Activated T-helper 2 cell treated with anti-CD3 and anti-CD28 coated beads, Interferon-gamma antibody, Interleukin-2, Interleukin-4, amounts not matched to agents 10 μg/mL and 5 μg/mL and 100 μg/mL, durations not matched to agents 14 hours and 24 hours and 36 hours (primary cell): ENCODE measurements at regions of chr16 and their contacts with region 1.

Region 1: GRCh38 chr16:75519881-75520280 is 16.0 kb downstream of the CHST5 start:
- DNase-seq: no peak
- H3K4me3 Mint-ChIP-seq: no peak overlapping the region
- H3K27ac Mint-ChIP-seq: no peak overlapping the region
- H3K4me1 Mint-ChIP-seq: peaks cover 7% of the 10 kb centered on the region
- H3K27me3 Mint-ChIP-seq: peaks cover 7% of the 10 kb centered on the region

Region 2: GRCh38 chr16:74501484-74502479 is 1018.1 kb before region 1 on chr16:
- intact Hi-C with region 1: no loop called
- DNase-seq: no peak
- H3K4me3 Mint-ChIP-seq: no peak overlapping the region
- H3K27ac Mint-ChIP-seq: no peak overlapping the region
- H3K4me1 Mint-ChIP-seq: no peaks in the 10 kb centered on the region
- H3K27me3 Mint-ChIP-seq: no peaks in the 10 kb centered on the region

Region 3: GRCh38 chr16:75464130-75464918 is 55.6 kb before region 1 on chr16 and contains the start of gene TMEM170A:
- intact Hi-C with region 1: loop called (anchors 1 kb)
- DNase-seq: peak; percentile 98
- H3K4me3 Mint-ChIP-seq: peak within 1 kb of the TSS; percentile 91
- H3K27ac Mint-ChIP-seq: peak within 1 kb of the TSS; percentile 89
- H3K4me1 Mint-ChIP-seq: peaks cover 36% of the 10 kb centered on the region
- H3K27me3 Mint-ChIP-seq: peaks cover 2% of the 10 kb centered on the region
- total RNA-seq, gene TMEM170A: 35.6 and 39.9 TPM in 2 replicates

Region 4: GRCh38 chr16:75555707-75556430 is 36.0 kb after region 1 on chr16 and contains the start of gene TMEM231:
- intact Hi-C with region 1: loop called (anchors 2 kb)
- DNase-seq: peak; percentile 94
- H3K4me3 Mint-ChIP-seq: peak within 1 kb of the TSS; percentile 90
- H3K27ac Mint-ChIP-seq: peak within 1 kb of the TSS; percentile 86
- H3K4me1 Mint-ChIP-seq: peaks cover 7% of the 10 kb centered on the region
- H3K27me3 Mint-ChIP-seq: peaks cover 26% of the 10 kb centered on the region
- total RNA-seq, gene TMEM231: 2.7 and 3.4 TPM in 2 replicates

Region 5: DNA sequence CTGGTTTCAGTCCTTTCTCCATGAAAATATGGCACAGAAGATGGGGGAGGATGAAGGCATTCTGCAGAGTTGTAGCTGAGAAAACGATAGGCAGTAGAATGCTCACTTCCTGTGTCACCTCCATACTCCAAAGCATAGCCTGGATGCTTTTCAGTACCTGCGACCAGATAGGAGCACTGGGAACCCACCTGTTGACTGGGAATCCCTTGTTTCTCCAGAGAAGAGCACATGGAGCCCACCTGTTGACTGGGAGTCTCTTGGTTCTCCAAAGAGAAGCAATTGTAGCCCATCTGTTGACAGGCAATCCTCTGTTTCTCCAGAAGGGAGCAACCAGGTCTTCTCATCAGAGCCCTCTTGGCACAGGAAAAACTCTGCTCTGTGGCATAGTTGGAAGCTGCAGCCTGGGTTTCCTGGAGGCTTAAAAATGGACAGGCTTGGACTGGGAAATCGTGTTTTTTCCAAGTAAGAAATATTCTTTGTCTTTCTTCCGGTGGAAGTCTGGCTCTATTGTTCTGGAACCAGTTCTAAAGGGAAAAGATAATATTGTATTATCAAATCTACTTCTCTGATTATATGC is 140.9 kb after region 1 on chr16:
- intact Hi-C with region 1: no loop called
- DNase-seq: no peak
- H3K4me3 Mint-ChIP-seq: no peak overlapping the region
- H3K27ac Mint-ChIP-seq: no peak overlapping the region
- H3K4me1 Mint-ChIP-seq: no peaks in the 10 kb centered on the region
- H3K27me3 Mint-ChIP-seq: no peaks in the 10 kb centered on the region